ENCODE measurements at regions of chr1 and their contacts with region 1.

Region 1: DNA sequence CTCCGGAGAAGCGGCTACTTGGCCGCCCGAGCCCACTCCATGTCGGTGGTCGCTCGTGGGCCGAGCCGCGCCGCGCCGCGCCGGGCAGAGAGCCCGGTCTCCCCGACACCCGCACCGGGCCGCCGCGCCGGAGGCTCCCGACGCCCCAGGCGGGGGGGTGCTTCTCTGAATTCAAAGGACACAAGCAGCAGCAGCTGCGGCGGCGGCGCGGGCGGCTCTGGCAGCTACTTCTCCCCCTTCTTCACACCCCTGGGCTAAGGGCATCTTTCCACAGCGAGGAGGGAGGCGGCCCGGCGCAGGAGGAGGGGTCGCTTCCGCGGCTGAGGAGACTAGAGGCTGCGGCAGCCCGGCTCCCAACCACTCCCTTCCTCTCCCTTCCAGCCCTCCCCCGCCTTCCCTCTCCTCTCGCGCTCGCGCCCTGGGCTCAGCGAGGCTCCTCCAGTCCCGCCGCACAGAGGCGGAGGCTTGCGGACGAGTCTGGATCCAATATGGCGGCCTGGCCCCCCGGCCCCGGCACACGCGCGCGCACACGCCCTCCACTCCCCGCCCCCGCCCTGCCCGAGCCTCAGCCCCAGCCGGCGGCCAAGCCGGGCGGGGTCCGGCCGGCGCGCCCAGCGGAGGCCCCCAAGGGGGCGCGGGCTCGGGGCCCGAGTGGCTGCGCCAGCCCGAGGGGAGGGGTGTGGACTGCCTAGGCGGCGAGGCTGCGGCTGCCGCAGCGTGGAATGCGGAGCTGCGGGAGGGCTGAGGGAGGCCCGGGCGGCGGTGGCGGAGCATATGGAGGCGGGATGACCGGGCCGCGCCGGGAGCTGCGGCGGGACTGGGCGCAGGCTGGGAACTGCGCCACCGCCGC is at the start of gene CDC42BPA:
- DNase-seq: peak; percentile 16 to 89
- H3K4me3 ChIP-seq: peak within 1 kb of the TSS; percentile 95 to 97
- H3K27ac ChIP-seq: peak within 1 kb of the TSS; percentile 92 to 99
- H3K4me1 ChIP-seq: peaks cover 0 to 3% of the 10 kb centered on the region in 2 donors
- H3K27me3 ChIP-seq: no peaks in the 10 kb centered on the region
- CTCF ChIP-seq: no peak
- total RNA-seq, gene CDC42BPA: 56.9 TPM

Region 2: GRCh38 chr1:225428068-225428880 is 1890.0 kb before region 1 on chr1:
- intact Hi-C with region 1: loop called (anchors 5 kb)
- DNase-seq: peak; percentile 80 to 96
- H3K4me3 ChIP-seq: peak overlapping the region; percentile 94 to 98
- H3K27ac ChIP-seq: peak overlapping the region; percentile 52 to 89
- H3K4me1 ChIP-seq: peaks cover 3 to 26% of the 10 kb centered on the region in 2 donors
- H3K27me3 ChIP-seq: no peaks in the 10 kb centered on the region
- CTCF ChIP-seq: no peak

Region 3: GRCh38 chr1:227111782-227112181 is 206.4 kb before region 1 on chr1:
- intact Hi-C with region 1: no loop called
- DNase-seq: no peak
- H3K4me3 ChIP-seq: no peak overlapping the region
- H3K27ac ChIP-seq: no peak overlapping the region
- H3K4me1 ChIP-seq: no peaks in the 10 kb centered on the region
- H3K27me3 ChIP-seq: no peaks in the 10 kb centered on the region
- CTCF ChIP-seq: no peak

Region 4: GRCh38 chr1:227170361-227171166 is 147.7 kb before region 1 on chr1:
- intact Hi-C with region 1: no loop called
- DNase-seq: no peak
- H3K4me3 ChIP-seq: no peak overlapping the region
- H3K27ac ChIP-seq: no peak overlapping the region
- H3K4me1 ChIP-seq: no peaks in the 10 kb centered on the region
- H3K27me3 ChIP-seq: no peaks in the 10 kb centered on the region
- CTCF ChIP-seq: no peak

Region 5: GRCh38 chr1:227185291-227185690 is 132.9 kb before region 1 on chr1:
- intact Hi-C with region 1: no loop called
- DNase-seq: no peak
- H3K4me3 ChIP-seq: no peak overlapping the region
- H3K27ac ChIP-seq: no peak overlapping the region
- H3K4me1 ChIP-seq: no peaks in the 10 kb centered on the region
- H3K27me3 ChIP-seq: no peaks in the 10 kb centered on the region
- CTCF ChIP-seq: no peak

Region 6: GRCh38 chr1:227273557-227273956 is 44.7 kb before region 1 on chr1:
- intact Hi-C with region 1: no loop called
- DNase-seq: no peak
- H3K4me3 ChIP-seq: no peak overlapping the region
- H3K27ac ChIP-seq: no peak overlapping the region
- H3K4me1 ChIP-seq: no peaks in the 10 kb centered on the region
- H3K27me3 ChIP-seq: no peaks in the 10 kb centered on the region
- CTCF ChIP-seq: no peak

Region 7: GRCh38 chr1:227299241-227299627 is 19.0 kb before region 1 on chr1:
- intact Hi-C with region 1: loop called (anchors 2 kb)
- DNase-seq: no peak
- H3K4me3 ChIP-seq: peak overlapping the region in 1 of 2 donors; percentile 48
- H3K27ac ChIP-seq: peak overlapping the region; percentile 31 to 66
- H3K4me1 ChIP-seq: peaks cover 0 to 8% of the 10 kb centered on the region in 2 donors
- H3K27me3 ChIP-seq: no peaks in the 10 kb centered on the region
- CTCF ChIP-seq: no peak

Region 8: GRCh38 chr1:227542143-227543120 is 224.2 kb after region 1 on chr1:
- intact Hi-C with region 1: loop called (anchors 10 kb)
- DNase-seq: peak; percentile 37 to 93
- H3K4me3 ChIP-seq: peak overlapping the region; percentile 93 to 98
- H3K27ac ChIP-seq: peak overlapping the region; percentile 79 to 85
- H3K4me1 ChIP-seq: peaks cover 4 to 8% of the 10 kb centered on the region in 2 donors
- H3K27me3 ChIP-seq: no peaks in the 10 kb centered on the region
- CTCF ChIP-seq: peak; percentile 82 to 92 (median 82)

Region 9: DNA sequence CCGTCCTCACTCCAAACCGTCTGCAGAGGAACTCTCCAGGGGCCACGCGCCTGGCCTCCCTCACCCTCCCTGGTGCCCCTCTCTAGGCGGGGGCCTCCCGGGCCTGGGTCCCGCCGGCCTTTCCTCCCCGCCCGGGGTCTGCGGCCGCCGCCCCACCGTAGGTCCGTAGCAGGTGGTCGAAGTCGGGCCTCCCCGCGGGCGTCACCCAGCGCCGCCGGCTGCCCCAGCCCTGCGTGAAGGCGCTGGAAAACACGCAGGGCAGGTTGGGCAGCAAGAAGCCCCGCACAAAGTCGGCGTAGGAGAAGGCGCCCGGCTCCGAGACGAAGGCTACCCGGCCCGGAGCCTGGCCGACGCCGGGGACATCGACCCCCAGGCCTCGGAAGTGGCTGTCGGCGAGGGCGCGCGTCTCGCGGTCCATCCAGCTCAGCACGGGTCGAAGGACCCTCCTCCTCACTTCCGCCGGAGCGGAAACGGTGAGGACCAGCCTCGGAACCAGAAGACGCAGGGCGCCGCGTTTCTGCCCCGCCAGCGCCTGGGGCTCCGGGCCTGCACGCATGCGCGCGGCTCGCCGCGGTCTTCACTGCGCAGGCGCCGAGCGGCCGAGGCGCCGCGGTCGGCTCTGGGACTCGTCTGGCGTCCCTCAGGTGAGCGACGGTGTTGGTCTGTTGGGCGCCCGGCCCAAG is 416.8 kb after region 1 on chr1 and contains the starts of genes JMJD4 and SNAP47:
- intact Hi-C with region 1: loop called (anchors 5 kb)
- DNase-seq: peak in 1 of 2 donors; percentile 95
- H3K4me3 ChIP-seq: peak within 1 kb of the TSS; percentile 81 to 93
- H3K27ac ChIP-seq: peak within 1 kb of the TSS; percentile 84 to 88
- H3K4me1 ChIP-seq: peaks cover 0 to 9% of the 10 kb centered on the region in 2 donors
- H3K27me3 ChIP-seq: no peaks in the 10 kb centered on the region
- CTCF ChIP-seq: no peak
- total RNA-seq, gene JMJD4: 10.6 TPM
- total RNA-seq, gene SNAP47: 54.0 TPM